Ovary (tissue), 10 donors: ENCODE measurements at regions of chr2 and their contacts with region 1.

Region 1: DNA sequence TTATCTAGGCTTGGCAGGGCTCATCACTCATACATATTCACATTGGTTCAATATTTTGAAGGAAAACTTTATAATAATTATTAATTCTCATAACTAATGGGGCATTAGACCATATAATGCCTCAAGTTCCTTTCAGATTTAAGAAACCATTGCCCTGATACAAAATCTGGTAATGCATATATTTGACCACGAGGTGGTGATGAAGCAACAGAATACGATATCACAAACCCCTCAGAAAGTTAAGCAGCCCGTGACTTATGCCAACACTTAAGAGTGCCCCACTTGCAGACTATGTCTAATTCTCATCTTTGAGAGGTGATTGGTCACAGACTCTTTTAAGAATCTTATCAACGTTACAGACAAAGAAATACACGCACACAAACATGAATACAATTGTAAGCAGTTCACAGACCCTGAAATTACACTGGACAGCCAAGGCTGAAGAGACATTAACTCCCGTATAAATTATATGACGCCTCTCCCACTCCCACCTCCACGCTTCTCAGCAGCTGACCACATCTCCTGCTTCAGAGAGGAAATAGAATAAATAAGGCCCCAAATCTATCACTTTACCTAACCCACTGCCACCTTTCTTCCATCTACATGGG is 20.7 kb upstream of the DNAH6 start:
- DNase-seq: no peak
- H3K4me3 ChIP-seq: no peak overlapping the region
- H3K27ac ChIP-seq: no peak overlapping the region
- H3K4me1 ChIP-seq: no peaks in the 10 kb centered on the region
- H3K27me3 ChIP-seq: no peaks in the 10 kb centered on the region
- CTCF ChIP-seq: peak; percentile 32 to 69 (median 46)
- EP300 ChIP-seq: no peak
- POLR2A ChIP-seq: no peak

Region 2: DNA sequence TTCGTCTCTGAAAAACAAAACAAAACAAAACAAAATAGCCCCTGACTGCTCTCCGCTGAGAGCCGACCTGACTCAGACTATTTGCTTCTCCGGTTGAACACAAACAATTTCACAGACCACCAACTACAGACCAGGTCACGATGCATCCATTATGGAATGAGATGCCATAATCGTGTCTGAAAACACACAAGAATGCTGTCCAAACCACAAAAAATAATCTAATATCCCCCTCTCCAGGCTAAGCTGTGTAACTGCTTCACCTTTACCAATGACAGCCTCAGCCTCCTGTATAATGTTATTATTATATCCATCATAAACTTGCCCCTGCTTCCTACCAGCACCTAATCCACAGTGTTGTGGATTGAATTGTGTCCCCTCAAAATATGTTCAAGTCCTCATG is 135.4 kb after region 1 on chr2:
- intact Hi-C with region 1: loop called in 3 of 4 experiments (anchors 2 to 10 kb)
- DNase-seq: no peak
- H3K4me3 ChIP-seq: no peak overlapping the region
- H3K27ac ChIP-seq: no peak overlapping the region
- H3K4me1 ChIP-seq: peaks cover 1% of the 10 kb centered on the region
- H3K27me3 ChIP-seq: no peaks in the 10 kb centered on the region
- CTCF ChIP-seq: peak; percentile 38 to 43 (median 39)
- EP300 ChIP-seq: no peak
- POLR2A ChIP-seq: no peak

Region 3: DNA sequence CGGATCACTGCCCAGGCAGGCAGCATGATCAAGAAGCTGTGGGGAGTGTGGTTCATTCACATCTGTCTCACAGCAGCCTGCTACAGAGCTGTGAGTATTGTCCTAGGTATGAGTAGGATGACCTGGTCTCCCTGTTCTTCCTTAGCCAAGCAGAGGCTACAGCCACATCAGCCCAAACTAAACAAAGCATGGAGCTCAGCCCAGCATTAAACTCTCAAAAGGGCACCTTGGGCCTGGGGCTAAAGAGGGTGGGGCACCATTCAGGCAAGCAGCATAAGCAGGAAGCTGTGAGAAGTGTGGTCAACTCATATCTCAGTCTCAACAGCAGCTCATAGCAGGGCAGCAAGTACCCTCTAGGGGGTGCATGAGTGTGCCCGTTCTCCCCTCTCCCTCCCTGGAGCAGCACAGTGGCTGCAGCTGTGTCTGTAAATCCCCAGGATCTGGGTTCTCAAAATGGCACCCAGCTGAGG is 245.7 kb after region 1 on chr2:
- intact Hi-C with region 1: no loop called
- DNase-seq: no peak
- H3K4me3 ChIP-seq: no peak overlapping the region
- H3K27ac ChIP-seq: no peak overlapping the region
- H3K4me1 ChIP-seq: no peaks in the 10 kb centered on the region
- H3K27me3 ChIP-seq: no peaks in the 10 kb centered on the region
- CTCF ChIP-seq: no peak
- EP300 ChIP-seq: no peak
- POLR2A ChIP-seq: no peak

Region 4: GRCh38 chr2:84925724-84926376 is 430.2 kb after region 1 on chr2:
- intact Hi-C with region 1: loop called in 3 of 4 experiments (anchors 5 to 10 kb)
- DNase-seq: peak; percentile 89 to 94 (median 92)
- H3K4me3 ChIP-seq: peak overlapping the region; percentile 28
- H3K27ac ChIP-seq: no peak overlapping the region
- H3K4me1 ChIP-seq: peaks cover 9% of the 10 kb centered on the region
- H3K27me3 ChIP-seq: no peaks in the 10 kb centered on the region
- CTCF ChIP-seq: peak; percentile 91 to 93 (median 92)
- EP300 ChIP-seq: no peak
- POLR2A ChIP-seq: no peak